ENCODE measurements at regions of chr11 and their contacts with region 1.

Region 1: GRCh38 chr11:9158898-9159391 is 67.5 kb upstream of the SCUBE2 start:
- DNase-seq: no peak
- H3K4me3 Mint-ChIP-seq: no peak overlapping the region
- H3K27ac Mint-ChIP-seq: peak overlapping the region; percentile 3
- H3K4me1 Mint-ChIP-seq: peaks cover 26% of the 10 kb centered on the region
- H3K27me3 Mint-ChIP-seq: no peaks in the 10 kb centered on the region

Region 2: GRCh38 chr11:9170450-9170849 is 11.5 kb after region 1 on chr11:
- CTCF ChIA-PET with region 1: interaction called, 13 read pairs
- POLR2A ChIA-PET with region 1: no interaction called
- intact Hi-C with region 1: no loop called
- DNase-seq: no peak
- H3K4me3 Mint-ChIP-seq: no peak overlapping the region
- H3K27ac Mint-ChIP-seq: no peak overlapping the region
- H3K4me1 Mint-ChIP-seq: peaks cover 10% of the 10 kb centered on the region
- H3K27me3 Mint-ChIP-seq: no peaks in the 10 kb centered on the region

Region 3: GRCh38 chr11:9384535-9385303 is 225.8 kb after region 1 on chr11 and contains the start of gene IPO7:
- CTCF ChIA-PET with region 1: no interaction called
- POLR2A ChIA-PET with region 1: interaction called, 6 read pairs
- intact Hi-C with region 1: loop called (anchors 10 kb)
- DNase-seq: peak; percentile 93
- H3K4me3 Mint-ChIP-seq: peak within 1 kb of the TSS; percentile 96
- H3K27ac Mint-ChIP-seq: peak within 1 kb of the TSS; percentile 87
- H3K4me1 Mint-ChIP-seq: peaks cover 29% of the 10 kb centered on the region
- H3K27me3 Mint-ChIP-seq: no peaks in the 10 kb centered on the region
- total RNA-seq, gene IPO7: 161 to 172 TPM